Activated CD4-positive, alpha-beta T cell treated with anti-CD3 and anti-CD28 coated beads, Interleukin-2, amount 10 ng/mL, durations not matched to agents 24 days and 14 days (primary cell): ENCODE measurements at regions of chr6 and their contacts with region 1.

Region 1: GRCh38 chr6:112163295-112164257 is 76.2 kb downstream of the FAM229B start:
- DNase-seq: peak; percentile 93
- H3K4me3 Mint-ChIP-seq: peak overlapping the region; percentile 45
- H3K27ac Mint-ChIP-seq: no peak overlapping the region
- H3K4me1 Mint-ChIP-seq: peaks cover 16% of the 10 kb centered on the region
- H3K27me3 Mint-ChIP-seq: peaks cover 58% of the 10 kb centered on the region

Region 2: DNA sequence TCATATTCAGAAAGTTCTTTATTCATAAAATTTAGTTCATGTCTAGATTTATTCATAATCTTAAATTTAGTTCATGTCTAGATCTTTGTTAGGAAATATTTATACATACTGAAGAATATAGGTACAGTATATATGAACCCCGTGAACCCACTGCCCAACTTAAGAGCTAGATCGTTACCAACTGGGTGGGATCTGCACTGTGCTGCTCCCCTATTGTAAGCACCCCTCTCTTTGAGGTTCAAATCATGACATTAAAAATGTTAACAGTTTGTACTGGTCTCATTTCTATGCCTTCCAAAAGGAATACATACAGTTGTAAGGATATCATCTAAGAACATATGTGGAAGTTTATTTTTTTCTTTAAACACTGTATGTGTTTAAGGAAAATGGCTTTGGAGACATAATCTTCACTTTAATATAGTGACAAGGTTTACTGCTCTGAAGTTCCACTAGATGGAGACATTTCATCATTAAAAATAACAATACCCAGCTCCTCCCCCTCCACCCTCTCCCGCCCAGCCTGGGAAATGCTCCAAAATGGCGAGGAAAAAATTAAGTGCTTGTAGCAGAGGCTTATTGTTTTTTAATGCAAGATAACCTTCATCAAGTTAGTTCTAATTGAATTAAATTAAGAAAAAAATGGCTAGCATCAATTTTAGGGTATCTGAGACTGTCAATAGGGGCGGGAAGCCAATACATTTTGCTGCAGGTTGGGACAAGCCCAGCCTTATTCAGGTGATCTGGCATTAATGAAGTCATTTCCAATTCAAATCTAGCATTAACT is 453.8 kb before region 1 on chr6:
- intact Hi-C with region 1: loop called (anchors 2 kb)
- DNase-seq: peak; percentile 85
- H3K4me3 Mint-ChIP-seq: no peak overlapping the region
- H3K27ac Mint-ChIP-seq: peak overlapping the region; percentile 59
- H3K4me1 Mint-ChIP-seq: peaks cover 56% of the 10 kb centered on the region
- H3K27me3 Mint-ChIP-seq: no peaks in the 10 kb centered on the region

Region 3: DNA sequence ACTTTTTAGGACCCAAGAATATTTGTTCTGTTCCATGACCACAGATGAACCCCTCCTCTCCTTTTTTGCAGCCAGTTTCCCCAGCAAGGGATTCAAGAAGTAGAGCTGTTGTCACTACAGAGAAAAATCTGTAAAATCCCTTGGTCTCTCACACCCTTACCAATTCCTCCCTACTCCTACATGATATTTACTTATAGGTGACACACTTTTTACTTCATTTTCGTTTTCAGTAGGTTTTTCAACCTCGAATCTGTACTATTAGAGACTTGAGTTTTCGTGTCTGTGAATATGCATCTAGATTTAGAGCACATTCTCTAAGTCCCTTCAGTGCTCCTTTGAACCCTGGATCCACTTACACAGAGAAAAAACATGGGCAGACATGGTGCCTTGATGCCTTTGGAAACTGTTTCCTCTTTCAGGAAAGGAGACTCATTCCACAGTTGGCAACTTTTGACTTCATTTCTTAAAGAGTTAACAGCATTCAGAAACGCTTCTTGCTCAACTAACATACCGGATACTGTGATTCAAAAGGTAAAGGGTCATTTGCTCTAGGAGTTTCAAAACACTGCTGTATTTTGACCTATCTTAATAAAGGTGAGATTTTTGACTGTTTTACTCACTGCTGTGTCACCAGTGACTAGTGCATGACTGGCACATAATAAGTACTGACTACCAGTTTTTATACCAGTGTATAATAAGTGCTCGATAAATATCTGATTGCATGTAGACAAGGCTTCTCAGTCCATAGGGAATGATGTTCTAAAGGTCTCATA is 40.2 kb after region 1 on chr6:
- intact Hi-C with region 1: no loop called
- DNase-seq: no peak
- H3K4me3 Mint-ChIP-seq: peak overlapping the region; percentile 32
- H3K27ac Mint-ChIP-seq: peak overlapping the region; percentile 12
- H3K4me1 Mint-ChIP-seq: peaks cover 7% of the 10 kb centered on the region
- H3K27me3 Mint-ChIP-seq: peaks cover 22% of the 10 kb centered on the region

Region 4: GRCh38 chr6:112282221-112282620 is 118.6 kb after region 1 on chr6:
- intact Hi-C with region 1: no loop called
- DNase-seq: no peak
- H3K4me3 Mint-ChIP-seq: no peak overlapping the region
- H3K27ac Mint-ChIP-seq: no peak overlapping the region
- H3K4me1 Mint-ChIP-seq: peaks cover 17% of the 10 kb centered on the region
- H3K27me3 Mint-ChIP-seq: peaks cover 59% of the 10 kb centered on the region